Endothelial cell of umbilical vein (primary cell): ENCODE measurements at regions of chr6 and their contacts with region 1.

Region 1: DNA sequence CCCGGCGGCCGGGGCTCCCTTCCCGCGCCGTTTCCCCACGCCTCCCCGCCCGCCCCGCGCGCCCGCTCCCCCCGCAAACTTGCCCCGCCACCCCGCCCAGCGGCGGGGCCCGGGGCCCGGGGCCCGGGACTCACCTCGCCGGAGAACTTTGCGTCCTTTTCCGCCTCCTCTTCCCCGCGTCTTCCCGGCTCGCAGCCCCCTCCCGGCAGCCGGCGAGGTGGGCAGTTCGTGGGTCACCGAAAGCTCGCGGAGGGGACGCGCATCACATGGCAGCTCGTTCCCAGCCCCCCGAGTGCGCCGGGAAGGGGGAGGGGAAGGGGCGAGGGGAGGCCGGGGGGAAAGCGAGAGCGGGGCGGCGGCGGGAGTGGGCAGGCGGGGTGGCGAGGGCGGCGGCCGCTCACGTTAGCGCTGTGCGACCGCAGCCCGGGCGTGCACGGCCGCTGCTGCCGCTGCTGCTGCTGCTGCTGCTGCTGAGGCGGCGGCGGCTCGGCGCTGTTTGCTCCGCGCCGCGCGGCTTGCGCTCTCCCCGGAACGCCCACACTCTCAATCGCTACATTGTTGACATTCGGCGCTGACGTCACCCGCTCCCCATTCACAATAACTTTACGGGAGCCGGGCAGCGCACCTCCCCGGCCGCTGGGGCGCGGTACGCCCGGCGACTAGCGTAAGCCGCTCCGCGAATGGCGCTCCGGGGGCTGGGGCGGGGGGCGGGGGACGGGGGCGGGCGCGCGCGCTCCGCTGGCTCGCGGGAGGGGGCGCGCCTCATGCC is at the start of gene BACH2:
- DNase-seq: peak; percentile 78
- H3K4me3 ChIP-seq: peak within 1 kb of the TSS; percentile 34 to 83 (median 57)
- H3K27ac ChIP-seq: no peak within 1 kb of the TSS
- H3K4me1 ChIP-seq: peaks cover 6% of the 10 kb centered on the region
- H3K27me3 ChIP-seq: peaks cover 12 to 38% of the 10 kb centered on the region in 2 experiments
- CTCF ChIP-seq: peak in 1 of 2 donors; percentile 30
- POLR2A ChIP-seq: no peak
- total RNA-seq, gene BACH2: 5.6 and 5.9 TPM in 2 replicates

Region 2: DNA sequence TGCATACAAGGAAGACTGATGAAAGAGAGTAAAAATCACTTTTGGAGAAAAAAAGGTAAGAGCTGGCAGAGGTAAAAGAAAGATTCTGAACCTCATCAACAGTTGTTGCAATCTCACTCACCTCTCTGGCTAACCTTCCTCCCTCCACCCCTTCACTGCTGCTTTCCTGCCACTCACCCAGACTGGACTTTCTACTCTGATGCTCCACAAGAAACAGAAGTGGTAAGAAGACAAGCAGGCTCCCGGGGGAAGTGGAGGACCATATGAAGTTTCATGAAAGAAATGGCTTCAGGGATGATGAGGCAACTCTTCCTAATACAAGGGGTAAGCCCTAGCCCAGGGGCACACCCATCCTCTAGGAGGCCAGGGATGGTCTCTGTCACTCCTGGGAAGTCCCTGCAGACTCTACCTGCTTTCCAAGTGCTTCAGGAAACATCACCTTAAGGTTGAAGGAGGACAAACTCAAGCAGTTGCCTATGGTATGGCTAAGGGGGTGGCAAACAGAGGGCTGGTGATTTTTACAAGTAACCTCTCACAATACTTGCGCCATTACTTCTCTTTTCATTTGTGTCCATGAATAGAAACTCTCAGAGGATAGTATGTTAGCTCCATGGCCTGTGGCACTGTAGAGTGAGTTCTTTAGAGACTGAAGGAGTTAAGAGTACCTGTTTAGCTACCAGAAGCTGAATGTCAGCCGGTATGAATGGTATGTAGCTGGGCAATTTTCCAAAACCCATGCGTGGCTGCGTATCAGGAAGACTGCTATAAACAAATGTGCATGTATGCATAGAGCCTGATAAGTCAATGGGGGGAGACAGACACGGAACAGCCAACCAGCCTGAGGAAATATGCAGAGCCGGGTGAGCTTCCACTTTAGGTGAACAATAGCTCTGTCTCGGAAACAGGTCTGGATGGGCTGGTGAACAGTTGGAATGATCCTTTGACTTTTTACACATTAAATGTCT is 111.9 kb before region 1 on chr6:
- CTCF ChIA-PET with region 1: interaction called, 3 read pairs
- POLR2A ChIA-PET with region 1: no interaction called
- dilution Hi-C with region 1: no loop called
- intact Hi-C with region 1: loop called (anchors 2 kb)
- DNase-seq: peak; percentile 92
- H3K4me3 ChIP-seq: no peak overlapping the region
- H3K27ac ChIP-seq: no peak overlapping the region
- H3K4me1 ChIP-seq: peaks cover 10% of the 10 kb centered on the region
- H3K27me3 ChIP-seq: no peaks in the 10 kb centered on the region
- CTCF ChIP-seq: no peak
- POLR2A ChIP-seq: no peak

Region 3: DNA sequence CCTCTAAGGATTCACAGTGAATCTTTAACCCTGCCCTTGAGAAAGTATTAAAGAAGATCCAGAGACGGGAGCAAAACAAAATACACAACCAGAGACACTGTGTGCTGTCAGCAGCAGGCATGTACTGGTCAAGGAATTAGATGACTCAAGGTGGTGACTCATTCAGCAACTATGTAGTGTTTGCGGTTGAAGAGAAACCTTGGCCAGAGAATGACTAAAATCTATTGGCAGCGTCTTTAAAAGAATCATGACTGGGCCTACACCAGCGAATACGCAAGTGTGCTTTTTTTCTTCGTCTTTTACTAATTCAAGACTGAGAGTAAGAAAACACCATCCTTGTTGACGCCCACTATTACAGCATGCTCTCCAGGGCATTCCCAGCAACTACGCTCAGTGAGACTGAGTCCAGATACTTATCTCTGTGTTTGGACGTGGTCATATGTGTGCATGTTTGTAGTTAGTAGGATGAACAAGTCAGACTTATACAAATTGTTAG is 72.5 kb after region 1 on chr6:
- CTCF ChIA-PET with region 1: no interaction called
- POLR2A ChIA-PET with region 1: no interaction called
- dilution Hi-C with region 1: no loop called
- intact Hi-C with region 1: loop called (anchors 1 kb)
- DNase-seq: peak; percentile 98
- H3K4me3 ChIP-seq: peak overlapping the region in 1 of 3 experiments; percentile 12
- H3K27ac ChIP-seq: peak overlapping the region; percentile 78
- H3K4me1 ChIP-seq: peaks cover 16% of the 10 kb centered on the region
- H3K27me3 ChIP-seq: no peaks in the 10 kb centered on the region
- CTCF ChIP-seq: no peak
- POLR2A ChIP-seq: no peak